Ovary (tissue), 10 donors: ENCODE measurements at regions of chr3 and their contacts with region 1.

Region 1: GRCh38 chr3:41900265-41900664 is 61.6 kb downstream of the ULK4 start:
- DNase-seq: no peak
- H3K4me3 ChIP-seq: no peak overlapping the region
- H3K27ac ChIP-seq: no peak overlapping the region
- H3K4me1 ChIP-seq: no peaks in the 10 kb centered on the region
- H3K27me3 ChIP-seq: no peaks in the 10 kb centered on the region
- CTCF ChIP-seq: no peak
- EP300 ChIP-seq: no peak
- POLR2A ChIP-seq: no peak

Region 2: GRCh38 chr3:41247055-41248004 is 652.9 kb before region 1 on chr3:
- intact Hi-C with region 1: no loop called
- DNase-seq: no peak
- H3K4me3 ChIP-seq: no peak overlapping the region
- H3K27ac ChIP-seq: no peak overlapping the region
- H3K4me1 ChIP-seq: no peaks in the 10 kb centered on the region
- H3K27me3 ChIP-seq: no peaks in the 10 kb centered on the region
- CTCF ChIP-seq: no peak
- EP300 ChIP-seq: no peak
- POLR2A ChIP-seq: no peak

Region 3: GRCh38 chr3:42205800-42206514 is 305.7 kb after region 1 on chr3:
- intact Hi-C with region 1: loop called in 1 of 4 experiments (anchors 10 kb)
- DNase-seq: no peak
- H3K4me3 ChIP-seq: no peak overlapping the region
- H3K27ac ChIP-seq: no peak overlapping the region
- H3K4me1 ChIP-seq: no peaks in the 10 kb centered on the region
- H3K27me3 ChIP-seq: no peaks in the 10 kb centered on the region
- CTCF ChIP-seq: no peak
- EP300 ChIP-seq: no peak
- POLR2A ChIP-seq: no peak